ENCODE measurements at regions of chr3 and their contacts with region 1.

Region 1: GRCh38 chr3:172595641-172596393 is 72.6 kb upstream of the TNFSF10 start:
- DNase-seq: peak in 2 of 6 donors; percentile 31 to 42
- ATAC-seq: peak; percentile 77 to 91 (median 84)
- H3K4me3 ChIP-seq: peak overlapping the region in 3 of 4 donors; percentile 1 to 33 (median 18)
- H3K27ac ChIP-seq: peak overlapping the region in 3 of 4 donors; percentile 17 to 92 (median 89)
- H3K4me1 ChIP-seq: peaks cover 6 to 19% (median 9%) of the 10 kb centered on the region in 3 donors
- H3K27me3 ChIP-seq: no peaks in the 10 kb centered on the region
- CTCF ChIP-seq: peak; percentile 41 to 70 (median 52)

Region 2: DNA sequence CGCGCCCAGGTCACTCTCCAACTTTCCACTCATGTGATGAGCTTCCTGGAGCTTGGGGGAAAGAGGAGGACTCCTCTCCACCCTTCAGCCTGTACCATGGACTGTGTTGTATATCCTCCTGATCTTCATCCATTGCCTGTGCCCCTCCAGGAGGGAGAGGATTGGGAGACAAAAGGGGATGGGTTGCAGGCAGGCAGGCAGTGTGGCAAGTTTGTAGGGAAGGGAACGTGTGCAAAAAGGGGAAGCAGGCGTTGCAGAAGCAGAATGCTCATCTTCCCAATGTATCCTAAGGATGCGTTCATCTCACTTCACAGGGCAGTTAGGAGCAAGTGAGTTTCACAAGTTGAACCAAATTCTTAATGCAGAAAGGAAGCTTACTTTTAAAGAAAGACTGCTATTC is 119.5 kb before region 1 on chr3:
- intact Hi-C with region 1: loop called in 1 of 3 experiments (anchors 10 kb)
- DNase-seq: no peak
- ATAC-seq: peak in 2 of 4 donors; percentile 9 to 12
- H3K4me3 ChIP-seq: peak overlapping the region in 1 of 4 donors; percentile 49
- H3K27ac ChIP-seq: peak overlapping the region in 1 of 4 donors; percentile 62
- H3K4me1 ChIP-seq: no peaks in the 10 kb centered on the region
- H3K27me3 ChIP-seq: no peaks in the 10 kb centered on the region
- CTCF ChIP-seq: no peak

Region 3: DNA sequence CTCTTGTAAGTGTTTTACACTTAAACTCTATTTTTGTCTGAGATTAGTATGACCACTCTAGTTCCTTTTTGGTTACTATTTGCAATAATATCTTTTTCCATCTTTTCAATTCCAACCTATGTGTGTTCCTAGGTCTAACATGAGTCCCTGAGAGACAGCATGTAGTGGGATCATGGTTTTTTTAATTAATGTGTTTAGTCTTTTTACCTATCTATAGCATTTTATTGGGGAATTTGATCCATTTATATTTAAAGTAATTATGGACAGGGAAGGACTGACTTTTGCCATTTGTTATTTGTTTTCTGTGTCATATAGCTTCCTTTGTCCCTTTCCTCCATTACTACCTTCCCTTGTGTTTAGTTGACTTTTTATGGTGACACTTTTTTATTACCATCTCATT is 94.3 kb before region 1 on chr3:
- intact Hi-C with region 1: loop called in 1 of 3 experiments (anchors 10 kb)
- DNase-seq: no peak
- ATAC-seq: no peak
- H3K4me3 ChIP-seq: no peak overlapping the region
- H3K27ac ChIP-seq: no peak overlapping the region
- H3K4me1 ChIP-seq: no peaks in the 10 kb centered on the region
- H3K27me3 ChIP-seq: no peaks in the 10 kb centered on the region
- CTCF ChIP-seq: no peak